Keratinocyte (primary cell): ENCODE measurements at regions of chr14 and their contacts with region 1.

Region 1: GRCh38 chr14:95561001-95561412 is 26.2 kb downstream of the GLRX5 start:
- DNase-seq: peak; percentile 57
- H3K4me3 ChIP-seq: no peak overlapping the region
- H3K27ac ChIP-seq: no peak overlapping the region
- H3K4me1 ChIP-seq: no peaks in the 10 kb centered on the region
- H3K27me3 ChIP-seq: no peaks in the 10 kb centered on the region
- CTCF ChIP-seq: peak; percentile 96 to 100 (median 99)

Region 2: GRCh38 chr14:95952945-95953724 is 392.1 kb after region 1 on chr14:
- dilution Hi-C with region 1: loop called (anchors 25 kb)
- DNase-seq: no peak
- H3K4me3 ChIP-seq: no peak overlapping the region
- H3K27ac ChIP-seq: no peak overlapping the region
- H3K4me1 ChIP-seq: no peaks in the 10 kb centered on the region
- H3K27me3 ChIP-seq: no peaks in the 10 kb centered on the region
- CTCF ChIP-seq: no peak